Activated CD4-positive, alpha-beta memory T cell treated with anti-CD3 and anti-CD28 coated beads, Interleukin-2, amount 10 ng/mL, durations not matched to agents 7 days and 5 days (primary cell): ENCODE measurements at regions of chr9 and their contacts with region 1.

Region 1: GRCh38 chr9:126704873-126705766 is 91.4 kb downstream of the LMX1B start:
- DNase-seq: peak; percentile 85
- H3K4me3 Mint-ChIP-seq: no peak overlapping the region
- H3K27ac Mint-ChIP-seq: no peak overlapping the region
- H3K4me1 Mint-ChIP-seq: peaks cover 13% of the 10 kb centered on the region
- H3K27me3 Mint-ChIP-seq: peaks cover 26% of the 10 kb centered on the region

Region 2: DNA sequence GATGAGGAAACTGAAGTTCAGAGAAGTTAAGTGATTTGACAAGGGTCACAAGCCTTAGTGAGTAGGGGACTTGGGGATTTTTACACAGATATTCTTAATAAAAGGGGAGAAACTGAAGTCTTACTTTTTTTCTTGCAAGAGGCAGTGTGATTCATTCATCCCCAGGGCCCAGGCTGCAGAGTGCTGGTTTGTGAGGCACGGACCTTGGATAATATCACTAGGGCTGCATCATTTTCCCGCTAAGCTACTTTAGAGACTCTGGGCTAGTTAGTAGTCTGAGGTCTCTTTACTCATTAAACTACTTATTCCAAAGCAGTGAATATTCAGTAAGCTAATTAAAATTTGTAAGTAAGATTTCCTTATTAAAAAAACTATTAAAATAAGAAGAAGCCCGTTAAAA is 763.0 kb before region 1 on chr9:
- CTCF ChIA-PET with region 1: no interaction called
- POLR2A ChIA-PET with region 1: no interaction called
- DNase-seq: no peak
- H3K4me3 Mint-ChIP-seq: no peak overlapping the region
- H3K27ac Mint-ChIP-seq: no peak overlapping the region
- H3K4me1 Mint-ChIP-seq: no peaks in the 10 kb centered on the region
- H3K27me3 Mint-ChIP-seq: no peaks in the 10 kb centered on the region

Region 3: GRCh38 chr9:126652140-126652558 is 53.0 kb before region 1 on chr9:
- CTCF ChIA-PET with region 1: no interaction called
- POLR2A ChIA-PET with region 1: no interaction called
- DNase-seq: no peak
- H3K4me3 Mint-ChIP-seq: no peak overlapping the region
- H3K27ac Mint-ChIP-seq: no peak overlapping the region
- H3K4me1 Mint-ChIP-seq: no peaks in the 10 kb centered on the region
- H3K27me3 Mint-ChIP-seq: peaks cover 68% of the 10 kb centered on the region

Region 4: DNA sequence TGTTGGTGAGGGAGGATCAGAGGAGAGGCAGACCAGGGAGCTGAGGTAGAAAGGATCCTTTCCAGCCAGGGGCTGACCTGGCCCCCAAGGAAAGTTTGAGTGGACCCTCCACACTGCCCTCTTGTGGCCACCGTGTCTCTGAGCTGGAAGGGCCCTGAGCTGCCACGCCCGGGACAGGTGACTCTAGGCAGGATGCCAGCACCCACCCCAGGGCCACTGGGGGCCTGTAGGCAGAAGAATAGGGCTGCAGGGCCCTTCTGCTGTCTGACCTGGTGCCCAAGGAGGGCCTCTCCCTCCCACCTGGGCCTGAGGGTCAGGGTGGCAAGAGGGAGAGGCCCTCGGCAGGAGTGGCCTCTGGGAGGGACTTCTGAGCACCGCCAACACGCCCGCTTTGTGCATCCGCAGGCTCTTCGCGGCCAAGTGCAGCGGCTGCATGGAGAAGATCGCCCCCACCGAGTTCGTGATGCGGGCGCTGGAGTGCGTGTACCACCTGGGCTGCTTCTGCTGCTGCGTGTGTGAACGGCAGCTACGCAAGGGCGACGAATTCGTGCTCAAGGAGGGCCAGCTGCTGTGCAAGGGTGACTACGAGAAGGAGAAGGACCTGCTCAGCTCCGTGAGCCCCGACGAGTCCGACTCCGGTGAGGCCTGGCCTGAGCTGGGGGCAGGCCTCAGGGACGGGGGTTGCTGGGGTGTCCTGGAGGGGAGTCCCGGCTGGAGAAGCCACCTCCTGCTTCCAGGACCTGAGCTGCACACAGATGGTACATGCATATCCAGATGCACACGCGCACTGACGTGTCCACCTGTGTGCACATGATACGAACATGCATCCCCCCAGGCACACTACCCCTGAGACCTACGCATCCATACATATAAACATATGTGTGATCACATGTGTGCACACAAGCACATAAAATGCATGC is 14.4 kb before region 1 on chr9:
- CTCF ChIA-PET with region 1: interaction called, 20 read pairs
- POLR2A ChIA-PET with region 1: no interaction called
- DNase-seq: peak; percentile 58
- H3K4me3 Mint-ChIP-seq: no peak overlapping the region
- H3K27ac Mint-ChIP-seq: no peak overlapping the region
- H3K4me1 Mint-ChIP-seq: no peaks in the 10 kb centered on the region
- H3K27me3 Mint-ChIP-seq: peaks cover 18% of the 10 kb centered on the region

Region 5: GRCh38 chr9:126722252-126723078 is 17.3 kb after region 1 on chr9:
- CTCF ChIA-PET with region 1: interaction called, 60 read pairs
- POLR2A ChIA-PET with region 1: interaction called, 31 read pairs
- DNase-seq: peak; percentile 89
- H3K4me3 Mint-ChIP-seq: peak overlapping the region; percentile 89
- H3K27ac Mint-ChIP-seq: peak overlapping the region; percentile 74
- H3K4me1 Mint-ChIP-seq: peaks cover 43% of the 10 kb centered on the region
- H3K27me3 Mint-ChIP-seq: peaks cover 10% of the 10 kb centered on the region

Region 6: GRCh38 chr9:126773004-126773607 is 68.0 kb after region 1 on chr9:
- CTCF ChIA-PET with region 1: interaction called, 436 read pairs
- POLR2A ChIA-PET with region 1: no interaction called
- DNase-seq: no peak
- H3K4me3 Mint-ChIP-seq: no peak overlapping the region
- H3K27ac Mint-ChIP-seq: no peak overlapping the region
- H3K4me1 Mint-ChIP-seq: no peaks in the 10 kb centered on the region
- H3K27me3 Mint-ChIP-seq: peaks cover 25% of the 10 kb centered on the region

Region 7: GRCh38 chr9:126791406-126792151 is 86.5 kb after region 1 on chr9:
- CTCF ChIA-PET with region 1: interaction called, 35 read pairs
- POLR2A ChIA-PET with region 1: interaction called, 5 read pairs
- DNase-seq: no peak
- H3K4me3 Mint-ChIP-seq: no peak overlapping the region
- H3K27ac Mint-ChIP-seq: no peak overlapping the region
- H3K4me1 Mint-ChIP-seq: peaks cover 11% of the 10 kb centered on the region
- H3K27me3 Mint-ChIP-seq: peaks cover 54% of the 10 kb centered on the region

Region 8: GRCh38 chr9:126860077-126860756 is 155.1 kb after region 1 on chr9 and contains the start of gene ZBTB34:
- CTCF ChIA-PET with region 1: interaction called, 10 read pairs
- POLR2A ChIA-PET with region 1: no interaction called
- DNase-seq: peak; percentile 79
- H3K4me3 Mint-ChIP-seq: peak within 1 kb of the TSS; percentile 79
- H3K27ac Mint-ChIP-seq: peak within 1 kb of the TSS; percentile 72
- H3K4me1 Mint-ChIP-seq: peaks cover 25% of the 10 kb centered on the region
- H3K27me3 Mint-ChIP-seq: peaks cover 26% of the 10 kb centered on the region
- total RNA-seq, gene ZBTB34: 8.2 TPM